PC-9 (cell line): ENCODE measurements at regions of chr4 and their contacts with region 1.

Region 1: DNA sequence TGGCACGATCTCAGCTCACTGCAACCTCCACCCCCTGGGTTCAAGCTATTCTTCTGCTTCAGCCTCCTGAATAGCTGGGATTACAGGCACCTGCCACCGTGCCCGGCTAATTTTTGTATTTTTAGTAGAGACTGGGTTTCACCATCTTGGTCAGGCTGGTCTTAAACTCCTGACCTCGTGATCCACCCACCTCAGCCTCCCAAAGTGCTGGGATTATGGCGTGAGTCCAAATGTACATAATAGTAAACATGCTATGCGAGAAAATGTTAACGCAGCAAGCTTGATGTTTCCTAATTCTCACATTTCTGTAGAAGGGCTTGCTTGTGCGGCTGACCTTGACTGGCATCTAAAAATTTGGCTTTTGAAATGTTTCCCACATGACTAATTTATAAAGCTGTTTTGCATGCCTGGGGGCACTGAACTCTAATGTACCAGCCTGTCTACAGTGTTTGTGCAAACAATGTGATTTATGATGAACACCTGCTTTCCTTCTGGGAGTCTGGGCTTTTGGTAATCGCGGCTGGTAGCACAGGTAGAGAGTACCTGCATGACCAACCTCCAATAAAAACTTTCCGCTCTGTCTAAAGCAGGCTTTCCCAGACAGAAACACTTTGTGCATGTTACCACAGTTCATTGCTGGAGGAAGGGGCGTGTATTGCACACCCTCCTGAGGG is 216.8 kb downstream of the IL15 start:
- DNase-seq: peak; percentile 67 to 96
- H3K4me3 ChIP-seq: no peak overlapping the region
- H3K27ac ChIP-seq: peak overlapping the region; percentile 91
- H3K4me1 ChIP-seq: peaks cover 19% of the 10 kb centered on the region
- H3K27me3 ChIP-seq: no peaks in the 10 kb centered on the region
- CTCF ChIP-seq: no peak

Region 2: GRCh38 chr4:141711014-141711610 is 142.1 kb before region 1 on chr4:
- CTCF ChIA-PET with region 1: no interaction called
- POLR2A ChIA-PET with region 1: interaction called, 12 read pairs
- intact Hi-C with region 1: loop called (anchors 10 kb)
- DNase-seq: no peak
- H3K4me3 ChIP-seq: no peak overlapping the region
- H3K27ac ChIP-seq: no peak overlapping the region
- H3K4me1 ChIP-seq: peaks cover 17% of the 10 kb centered on the region
- H3K27me3 ChIP-seq: no peaks in the 10 kb centered on the region
- CTCF ChIP-seq: peak; percentile 41